Activated CD4-positive, alpha-beta T cell treated with anti-CD3 and anti-CD28 coated beads for 36 hours (primary cell): ENCODE measurements at regions of chr1 and their contacts with region 1.

Region 1: DNA sequence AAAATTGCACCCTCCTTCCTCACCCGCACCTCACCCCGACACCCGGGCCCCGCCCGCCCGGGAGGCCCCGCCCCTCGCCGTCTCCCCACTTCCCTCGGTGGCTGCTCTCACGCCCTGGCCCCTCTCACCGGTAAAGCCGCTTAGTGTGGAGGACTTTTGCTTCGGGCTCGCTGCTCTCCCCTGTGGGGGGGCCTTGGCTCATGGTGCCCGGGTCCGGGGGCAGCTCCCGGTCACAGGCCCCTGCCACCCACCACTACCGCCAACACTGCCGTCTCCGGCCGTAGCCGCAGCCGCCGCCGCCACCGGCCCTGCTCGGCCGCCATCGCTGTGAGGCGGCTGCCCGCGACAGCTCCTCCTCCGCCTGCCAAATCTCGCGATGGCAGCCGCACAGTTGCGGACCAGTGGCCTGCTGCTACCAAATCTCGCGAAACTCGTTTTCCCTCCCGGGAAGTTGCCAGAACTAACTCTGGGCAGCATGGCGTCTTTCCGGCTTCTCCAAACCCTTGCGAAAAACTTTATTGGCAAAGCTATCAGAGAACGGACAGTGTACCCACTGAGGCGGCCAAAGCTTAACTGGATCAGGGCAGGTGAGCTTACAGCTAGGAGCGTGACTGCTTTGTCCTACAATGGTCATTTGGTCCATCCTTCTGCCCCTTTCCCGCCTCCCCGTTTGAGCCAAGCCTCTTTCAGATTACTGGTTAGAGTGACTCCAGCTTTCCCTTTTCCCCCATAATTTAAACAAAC is at the start of gene SMG5:
- DNase-seq: peak; percentile 98
- ATAC-seq: peak; percentile 92
- H3K4me3 Mint-ChIP-seq: peak within 1 kb of the TSS; percentile 96
- H3K27ac Mint-ChIP-seq: peak within 1 kb of the TSS; percentile 92
- H3K4me1 Mint-ChIP-seq: peaks cover 29% of the 10 kb centered on the region
- H3K27me3 Mint-ChIP-seq: no peaks in the 10 kb centered on the region
- total RNA-seq, gene SMG5: 61.7 to 64.6 TPM

Region 2: DNA sequence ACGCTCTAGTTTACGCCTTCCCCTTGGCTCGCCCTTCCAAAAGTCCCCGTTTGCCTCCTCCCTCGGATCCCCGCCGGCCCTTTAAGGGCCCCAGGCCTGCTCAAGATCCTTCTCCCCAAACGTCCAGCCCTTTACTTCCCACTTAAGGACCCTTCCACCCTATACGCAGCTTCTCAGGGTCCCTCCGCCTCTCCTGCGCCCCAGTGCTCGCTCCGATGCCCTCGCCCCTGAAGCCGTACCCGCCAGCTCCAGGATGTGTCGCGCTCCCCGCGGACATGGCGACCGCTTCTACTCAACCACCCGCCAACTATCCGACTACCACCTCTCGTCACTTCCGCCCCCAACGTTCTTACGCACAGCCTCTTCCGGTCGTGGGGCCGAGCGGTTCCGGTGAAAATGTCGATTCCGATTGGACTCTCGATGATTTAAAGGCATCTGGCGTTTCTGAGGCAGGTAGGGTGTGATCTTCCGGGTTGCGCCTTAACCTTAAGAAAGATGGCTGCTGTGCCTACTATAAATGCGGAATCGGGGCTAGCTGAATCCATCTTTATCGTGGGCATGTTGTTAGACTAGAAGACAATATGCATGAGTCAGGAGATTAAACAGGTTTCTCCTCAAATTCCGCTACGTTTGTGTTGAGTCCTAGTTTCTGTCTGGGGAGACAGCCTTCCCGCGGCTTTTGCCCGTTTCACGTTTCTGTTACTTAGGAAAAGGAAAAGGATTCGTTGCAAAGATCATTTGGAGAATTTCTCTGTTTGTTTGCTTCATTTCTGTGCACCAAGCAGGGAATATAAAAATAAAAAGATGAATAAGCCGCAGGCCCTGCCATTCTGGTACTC is 348.3 kb before region 1 on chr1 and contains the start of gene KHDC4:
- CTCF ChIA-PET with region 1: no interaction called
- POLR2A ChIA-PET with region 1: no interaction called
- intact Hi-C with region 1: loop called in 1 of 2 experiments (anchors 1 kb)
- DNase-seq: peak; percentile 97
- ATAC-seq: peak; percentile 97
- H3K4me3 Mint-ChIP-seq: no peak within 1 kb of the TSS
- H3K27ac Mint-ChIP-seq: no peak within 1 kb of the TSS
- H3K4me1 Mint-ChIP-seq: peaks cover 46% of the 10 kb centered on the region
- H3K27me3 Mint-ChIP-seq: no peaks in the 10 kb centered on the region
- total RNA-seq, gene KHDC4: 68.7 to 97.5 TPM

Region 3: GRCh38 chr1:156054500-156055280 is 228.0 kb before region 1 on chr1 and contains the start of gene LAMTOR2:
- CTCF ChIA-PET with region 1: interaction called, 4 read pairs
- POLR2A ChIA-PET with region 1: interaction called, 3 read pairs
- intact Hi-C with region 1: loop called in 1 of 2 experiments (anchors 1 kb)
- DNase-seq: peak; percentile 98
- ATAC-seq: peak; percentile 82
- H3K4me3 Mint-ChIP-seq: peak within 1 kb of the TSS; percentile 92
- H3K27ac Mint-ChIP-seq: peak within 1 kb of the TSS; percentile 88
- H3K4me1 Mint-ChIP-seq: peaks cover 18% of the 10 kb centered on the region
- H3K27me3 Mint-ChIP-seq: no peaks in the 10 kb centered on the region
- total RNA-seq, gene LAMTOR2: 26.1 to 50.3 TPM

Region 4: DNA sequence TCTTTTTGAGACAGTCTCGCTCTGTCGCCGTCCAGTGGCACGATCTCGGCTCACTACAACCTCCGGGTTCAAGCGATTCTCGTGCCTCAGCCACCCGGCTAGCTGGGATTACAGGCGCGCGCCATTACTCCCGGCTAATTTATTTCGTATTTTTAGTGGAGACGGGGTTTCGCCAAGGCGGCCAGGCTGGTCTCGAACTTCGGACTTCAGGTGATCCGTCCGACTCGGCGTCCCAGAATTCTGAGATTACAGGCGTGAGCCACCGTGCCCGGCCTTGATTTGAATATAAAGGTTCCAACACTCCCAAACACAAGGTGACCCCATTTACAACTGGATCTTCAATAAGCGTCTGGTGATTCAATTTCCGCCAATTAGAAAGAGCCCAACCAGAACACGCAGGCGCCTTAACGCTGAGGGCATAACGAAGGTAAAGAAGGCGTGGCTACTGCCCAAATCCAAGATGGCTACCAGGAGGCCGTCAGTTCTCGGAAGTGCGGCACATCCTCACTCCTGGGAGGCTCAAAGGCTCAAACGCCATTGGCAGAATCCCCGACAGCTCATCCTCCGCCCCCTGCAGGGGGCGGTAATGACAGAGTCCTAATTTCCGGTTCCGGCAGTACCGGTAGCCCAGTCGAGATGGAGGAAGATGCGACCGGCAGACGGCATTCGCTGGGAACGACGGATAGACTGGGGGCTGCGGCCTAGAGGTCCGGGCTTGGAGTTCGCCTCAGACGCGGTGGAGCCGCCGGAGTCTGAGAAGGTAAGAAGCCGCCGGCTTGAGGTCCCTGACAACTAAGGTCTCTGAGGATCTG is 89.0 kb before region 1 on chr1 and contains the start of gene SLC25A44:
- CTCF ChIA-PET with region 1: no interaction called
- POLR2A ChIA-PET with region 1: no interaction called
- intact Hi-C with region 1: loop called (anchors 1 to 5 kb)
- DNase-seq: peak; percentile 98
- ATAC-seq: peak; percentile 96
- H3K4me3 Mint-ChIP-seq: peak within 1 kb of the TSS; percentile 100
- H3K27ac Mint-ChIP-seq: peak within 1 kb of the TSS; percentile 97
- H3K4me1 Mint-ChIP-seq: peaks cover 43% of the 10 kb centered on the region
- H3K27me3 Mint-ChIP-seq: no peaks in the 10 kb centered on the region
- total RNA-seq, gene SLC25A44: 42.4 to 51.9 TPM

Region 5: GRCh38 chr1:156295391-156295947 is 12.8 kb after region 1 on chr1 and contains the start of gene GLMP:
- CTCF ChIA-PET with region 1: interaction called, 3 read pairs
- POLR2A ChIA-PET with region 1: interaction called, 6 read pairs
- intact Hi-C with region 1: loop called in 1 of 2 experiments (anchors 1 kb)
- DNase-seq: peak; percentile 81
- ATAC-seq: peak; percentile 84
- H3K4me3 Mint-ChIP-seq: peak within 1 kb of the TSS; percentile 82
- H3K27ac Mint-ChIP-seq: peak within 1 kb of the TSS; percentile 65
- H3K4me1 Mint-ChIP-seq: peaks cover 16% of the 10 kb centered on the region
- H3K27me3 Mint-ChIP-seq: no peaks in the 10 kb centered on the region
- total RNA-seq, gene GLMP: 10.8 to 12.1 TPM

Region 6: DNA sequence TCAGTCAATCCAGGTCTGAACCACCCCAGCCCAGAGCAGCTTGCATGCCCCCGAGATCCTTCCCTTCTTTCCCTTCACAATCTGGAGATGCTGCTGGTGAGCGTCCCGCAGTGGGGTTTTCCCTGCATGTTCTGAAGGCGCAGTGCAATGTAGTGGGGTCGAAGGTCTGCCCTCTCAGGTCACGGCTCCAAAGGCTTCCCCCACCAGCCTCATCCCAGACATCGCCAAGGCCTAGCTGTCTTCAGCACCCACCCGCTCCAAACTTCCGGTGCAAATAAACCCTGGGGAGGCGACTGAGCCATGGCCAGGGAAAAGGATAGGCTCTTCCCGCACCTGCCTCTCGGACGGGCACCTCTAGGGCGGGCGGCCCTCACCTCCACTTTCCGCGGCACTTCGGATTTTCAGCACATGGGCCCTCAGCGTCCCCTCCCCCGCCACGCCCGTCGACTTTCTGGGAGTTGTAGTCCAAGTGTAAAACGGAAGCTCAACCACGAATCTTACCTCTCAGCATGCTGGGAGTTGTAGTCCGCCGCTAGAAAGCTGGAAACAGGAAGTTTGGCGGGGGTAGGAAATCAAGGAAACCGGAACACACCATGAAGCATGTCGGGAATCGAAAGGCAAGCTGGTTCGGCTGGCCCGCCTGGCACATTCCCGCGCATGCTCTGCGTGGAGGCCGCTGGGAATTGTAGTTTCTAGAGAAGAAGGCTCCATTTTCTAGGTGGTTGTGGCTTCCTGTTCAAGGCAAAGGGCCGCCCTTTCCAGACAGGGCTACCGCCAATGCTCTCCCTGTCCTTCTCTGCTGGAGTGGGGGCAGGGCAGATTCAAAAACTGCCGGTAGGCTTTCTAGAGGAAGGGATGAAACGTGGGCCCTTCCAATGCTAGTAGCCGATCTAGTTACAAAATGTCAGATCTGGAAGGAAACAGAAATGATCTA is 458.3 kb after region 1 on chr1 and contains the start of gene MRPL24:
- CTCF ChIA-PET with region 1: no interaction called
- POLR2A ChIA-PET with region 1: no interaction called
- intact Hi-C with region 1: loop called in 1 of 2 experiments (anchors 1 kb)
- DNase-seq: peak; percentile 98
- ATAC-seq: peak; percentile 86
- H3K4me3 Mint-ChIP-seq: peak within 1 kb of the TSS; percentile 98
- H3K27ac Mint-ChIP-seq: peak within 1 kb of the TSS; percentile 94
- H3K4me1 Mint-ChIP-seq: peaks cover 49% of the 10 kb centered on the region
- H3K27me3 Mint-ChIP-seq: no peaks in the 10 kb centered on the region
- total RNA-seq, gene MRPL24: 81.9 to 89.7 TPM